Naive thymus-derived CD8-positive, alpha-beta T cell (primary cell): ENCODE measurements at regions of chr6 and their contacts with region 1.

Region 1: DNA sequence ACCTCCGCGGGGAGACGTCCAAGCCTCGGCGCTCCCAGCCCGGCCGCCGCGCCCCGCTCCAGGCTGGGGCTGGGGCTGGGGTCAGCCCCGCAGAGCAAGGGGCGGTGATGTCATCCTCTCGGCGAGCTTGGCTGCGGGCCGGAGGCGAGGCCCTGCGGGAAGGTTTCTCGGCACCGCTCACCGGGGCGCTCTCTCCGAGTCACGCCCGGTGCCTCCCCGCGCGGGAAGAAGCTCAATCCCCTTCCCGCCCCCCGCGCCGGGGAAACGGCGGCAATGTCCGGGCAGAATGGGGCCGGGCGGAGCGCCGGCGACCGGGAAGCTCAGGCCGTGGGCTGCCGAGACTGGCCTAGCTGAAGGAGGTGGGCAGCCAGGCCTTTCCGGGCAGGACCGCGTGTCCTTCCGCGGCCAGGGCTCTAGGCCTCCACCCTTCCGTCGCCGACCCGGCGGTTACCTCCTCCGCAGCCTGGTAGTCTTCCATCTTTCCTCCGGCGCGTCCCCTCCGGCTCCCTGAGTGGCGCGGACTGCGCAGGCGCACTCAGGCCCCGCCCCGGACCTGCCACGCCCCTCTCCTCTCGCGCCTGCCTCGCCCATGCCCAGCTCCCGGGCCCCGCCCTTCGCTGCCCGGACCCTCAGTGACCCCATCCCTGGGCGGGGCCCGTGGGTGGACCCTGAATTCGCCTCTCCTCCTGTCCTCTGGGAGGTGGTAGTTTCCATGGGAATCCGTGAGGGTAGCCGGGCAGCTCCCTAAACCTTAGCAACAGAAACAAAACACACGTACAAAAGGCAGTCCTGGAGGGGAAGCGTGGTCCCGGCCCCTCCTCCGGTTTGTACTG is at the start of gene DYNLT1:
- DNase-seq: peak; percentile 72 to 94 (median 88)
- ATAC-seq: peak; percentile 75 to 76
- H3K4me3 Mint-ChIP-seq: peak within 1 kb of the TSS; percentile 94 to 99 (median 98)
- H3K27ac Mint-ChIP-seq: peak within 1 kb of the TSS; percentile 89 to 100 (median 99)
- H3K4me1 Mint-ChIP-seq: peaks cover 36 to 68% (median 63%) of the 10 kb centered on the region in 4 donors
- H3K27me3 Mint-ChIP-seq: no peaks in the 10 kb centered on the region
- polyA plus RNA-seq, gene DYNLT1: 63.3 to 78.6 (median 63.7) TPM

Region 2: DNA sequence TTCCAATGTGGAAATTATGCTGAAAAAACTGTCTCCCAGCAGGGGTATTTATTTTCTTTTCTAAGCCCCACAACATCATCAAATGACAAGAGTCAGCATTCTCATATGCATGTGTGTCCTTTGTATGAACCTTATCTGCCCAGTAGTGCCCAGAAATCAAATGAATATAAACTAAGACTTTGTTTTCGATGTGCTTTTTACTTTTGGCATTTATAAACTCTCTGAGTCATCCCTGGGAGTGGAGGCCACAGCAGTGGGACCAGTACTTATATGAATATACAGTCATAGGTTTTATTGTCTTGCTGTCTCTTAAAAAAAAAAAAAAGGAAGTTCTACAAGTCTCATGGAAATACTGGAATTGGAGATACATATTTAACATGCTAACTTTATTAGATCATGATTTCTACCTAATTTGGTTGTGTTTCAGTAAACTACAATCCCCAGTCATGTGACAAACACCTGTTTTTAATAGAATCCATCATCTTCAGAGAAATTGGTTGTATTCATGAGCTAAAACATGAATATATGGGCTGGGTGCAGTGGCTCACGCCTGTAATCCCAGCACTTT is 183.8 kb before region 1 on chr6:
- POLR2A ChIA-PET with region 1: no interaction called
- DNase-seq: no peak
- ATAC-seq: no peak
- H3K4me3 Mint-ChIP-seq: no peak overlapping the region
- H3K27ac Mint-ChIP-seq: no peak overlapping the region
- H3K4me1 Mint-ChIP-seq: no peaks in the 10 kb centered on the region
- H3K27me3 Mint-ChIP-seq: no peaks in the 10 kb centered on the region

Region 3: DNA sequence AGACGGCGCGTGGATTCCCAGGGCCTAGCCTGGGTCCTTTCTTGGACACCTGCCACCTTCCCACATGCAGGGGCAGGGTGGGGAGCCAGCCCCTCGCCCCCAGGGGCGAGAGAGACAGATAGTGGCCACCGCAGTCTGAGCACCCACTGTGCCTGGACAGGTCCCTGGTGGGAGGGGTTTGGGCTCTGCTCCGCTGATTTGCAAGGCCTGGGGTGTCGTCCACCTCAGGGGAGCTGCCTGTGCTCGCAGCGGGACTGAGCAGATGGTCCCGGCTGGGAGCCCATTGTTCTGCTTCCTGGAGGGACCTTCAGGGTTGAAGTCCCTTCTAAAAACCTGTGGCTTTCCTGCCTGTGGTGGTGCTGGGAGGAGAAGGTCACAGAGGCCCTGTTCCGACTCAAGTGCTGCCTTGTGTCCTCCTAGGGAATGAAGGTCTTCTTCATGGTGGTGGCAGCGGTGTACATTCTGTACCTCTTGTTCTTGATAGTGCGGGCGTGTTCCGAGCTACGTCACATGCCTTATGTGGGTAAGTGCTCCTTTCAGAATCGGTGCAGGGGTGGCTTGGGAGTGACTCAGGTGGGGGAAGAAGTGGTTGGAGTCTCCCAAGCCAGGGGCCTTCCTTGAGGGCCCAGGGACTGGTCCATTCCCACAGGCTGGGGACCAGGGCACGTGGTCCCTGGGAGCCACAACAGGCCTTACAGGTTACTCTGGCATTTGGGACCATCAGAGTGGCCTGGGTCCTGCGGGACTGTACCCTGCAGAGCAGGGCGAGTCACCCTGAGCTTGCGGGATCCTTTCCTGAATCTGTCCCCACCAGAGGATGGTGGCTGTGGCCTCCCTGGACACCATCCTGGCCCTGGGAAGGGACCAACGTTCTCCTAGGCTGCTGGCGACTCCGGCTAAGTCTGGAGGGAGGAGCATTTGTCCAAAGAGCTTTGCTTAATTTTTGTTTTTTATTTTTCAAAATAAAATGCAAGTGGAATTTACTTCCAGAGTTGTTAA is 19.5 kb before region 1 on chr6:
- POLR2A ChIA-PET with region 1: no interaction called
- DNase-seq: no peak
- ATAC-seq: no peak
- H3K4me3 Mint-ChIP-seq: no peak overlapping the region
- H3K27ac Mint-ChIP-seq: peak overlapping the region in 6 of 10 donors; percentile 40 to 82 (median 74)
- H3K4me1 Mint-ChIP-seq: peaks cover 2 to 19% (median 17%) of the 10 kb centered on the region in 4 donors
- H3K27me3 Mint-ChIP-seq: no peaks in the 10 kb centered on the region

Region 4: DNA sequence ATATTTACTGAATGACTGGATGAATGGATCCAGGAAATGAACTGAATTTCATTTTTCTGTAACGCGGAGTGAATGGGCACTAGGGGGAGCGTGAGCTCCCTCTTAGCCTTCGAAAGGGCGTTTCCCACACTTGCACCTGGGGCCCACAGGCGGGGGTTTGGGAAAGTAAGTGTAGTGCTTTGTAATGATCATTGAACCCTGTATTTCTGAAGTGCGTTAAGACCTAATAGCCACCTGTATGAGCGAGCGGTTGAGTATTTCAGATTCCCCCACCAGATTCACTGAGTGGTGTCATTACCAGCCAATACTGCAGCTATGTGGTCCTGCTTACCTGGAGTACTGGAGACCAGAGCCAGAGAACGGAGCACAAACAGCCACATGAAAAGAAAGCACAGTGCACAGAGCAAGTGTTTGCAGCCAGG is 15.9 kb after region 1 on chr6:
- POLR2A ChIA-PET with region 1: interaction called, 55 read pairs
- DNase-seq: peak in 9 of 10 donors; percentile 27 to 78 (median 58)
- ATAC-seq: peak; percentile 65 to 75
- H3K4me3 Mint-ChIP-seq: peak overlapping the region in 9 of 10 donors; percentile 23 to 72 (median 41)
- H3K27ac Mint-ChIP-seq: peak overlapping the region in 9 of 10 donors; percentile 14 to 95 (median 90)
- H3K4me1 Mint-ChIP-seq: peaks cover 8 to 56% (median 42%) of the 10 kb centered on the region in 4 donors
- H3K27me3 Mint-ChIP-seq: no peaks in the 10 kb centered on the region

Region 5: DNA sequence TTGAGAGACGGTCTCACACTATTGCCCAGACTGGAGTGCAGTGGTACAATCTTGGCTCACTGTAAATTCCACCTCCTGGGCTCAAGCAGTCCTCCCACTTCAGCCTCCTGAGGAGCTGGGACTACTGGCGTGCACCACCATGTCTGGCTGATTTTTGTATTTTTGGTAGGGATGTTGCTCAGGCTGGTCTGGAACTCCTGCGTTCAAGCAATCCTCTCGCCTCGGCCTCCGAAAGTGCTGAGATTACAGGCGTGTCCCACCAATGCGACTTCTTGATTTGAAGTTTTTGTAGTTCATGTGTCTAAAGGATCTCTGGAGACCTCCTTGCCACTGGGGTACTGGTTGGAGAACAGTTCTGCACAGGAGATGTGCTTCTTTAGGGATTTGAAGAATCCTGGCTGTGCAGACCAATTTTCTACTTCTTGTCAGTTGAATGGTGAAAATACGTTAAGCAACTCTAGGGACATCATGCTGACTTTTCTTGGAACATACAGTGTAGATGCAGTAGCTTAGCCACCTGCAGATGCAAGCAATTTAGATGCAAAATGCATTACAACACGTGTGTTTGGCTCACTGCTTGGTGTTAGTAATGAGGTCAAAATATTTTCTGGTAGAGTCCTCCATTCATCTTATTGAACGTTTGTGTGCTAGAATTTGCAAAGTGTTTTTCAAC is 33.6 kb after region 1 on chr6:
- POLR2A ChIA-PET with region 1: no interaction called
- DNase-seq: no peak
- ATAC-seq: no peak
- H3K4me3 Mint-ChIP-seq: no peak overlapping the region
- H3K27ac Mint-ChIP-seq: peak overlapping the region in 6 of 10 donors; percentile 10 to 80 (median 24)
- H3K4me1 Mint-ChIP-seq: peaks cover 0 to 19% (median 2%) of the 10 kb centered on the region in 4 donors
- H3K27me3 Mint-ChIP-seq: no peaks in the 10 kb centered on the region

Region 6: DNA sequence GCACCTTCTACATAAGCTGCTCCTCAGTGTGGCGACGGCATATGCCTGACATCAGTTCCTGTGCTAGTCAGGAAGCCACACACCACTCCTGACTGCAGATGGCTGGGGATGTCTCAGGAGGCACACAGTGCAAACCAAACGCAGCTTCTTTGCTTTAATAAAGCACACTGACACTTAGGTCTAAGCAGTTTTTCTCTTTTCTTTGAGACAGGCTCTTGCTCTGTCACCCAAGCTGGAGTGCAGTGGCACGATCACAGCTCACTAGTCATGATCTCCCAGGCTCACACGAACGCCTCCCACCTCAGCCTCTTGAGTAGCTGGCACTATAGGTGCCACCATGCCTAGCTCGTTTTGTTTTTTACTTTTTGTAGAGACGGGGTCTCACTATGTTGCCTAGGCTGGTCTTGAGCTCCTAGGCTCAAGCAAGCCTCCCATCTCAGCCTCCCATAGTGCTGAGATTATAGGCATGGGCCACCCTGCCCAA is 145.0 kb after region 1 on chr6:
- POLR2A ChIA-PET with region 1: no interaction called
- DNase-seq: peak; percentile 35 to 87 (median 71)
- ATAC-seq: peak; percentile 88 to 99
- H3K4me3 Mint-ChIP-seq: peak overlapping the region; percentile 70 to 90 (median 78)
- H3K27ac Mint-ChIP-seq: peak overlapping the region; percentile 94 to 98 (median 97)
- H3K4me1 Mint-ChIP-seq: peaks cover 25 to 79% (median 61%) of the 10 kb centered on the region in 4 donors
- H3K27me3 Mint-ChIP-seq: no peaks in the 10 kb centered on the region